Common myeloid progenitor, CD34-positive (primary cell): ENCODE measurements at regions of chr22 and their contacts with region 1.

Region 1: GRCh38 chr22:21629262-21630149 is at the start of gene YDJC:
- DNase-seq: peak; percentile 96 to 98 (median 97)
- H3K4me3 ChIP-seq: peak within 1 kb of the TSS; percentile 84 to 98 (median 92)
- H3K27ac ChIP-seq: peak within 1 kb of the TSS; percentile 74 to 91
- H3K4me1 ChIP-seq: peaks cover 0 to 36% (median 28%) of the 10 kb centered on the region in 4 experiments
- H3K27me3 ChIP-seq: no peaks in the 10 kb centered on the region

Region 2: GRCh38 chr22:21593406-21594232 is 35.9 kb before region 1 on chr22:
- CTCF ChIA-PET with region 1: interaction called, 10 read pairs
- POLR2A ChIA-PET with region 1: interaction called, 3 read pairs
- DNase-seq: no peak
- H3K4me3 ChIP-seq: no peak overlapping the region
- H3K27ac ChIP-seq: no peak overlapping the region
- H3K4me1 ChIP-seq: peaks cover 0 to 40% (median 25%) of the 10 kb centered on the region in 4 experiments
- H3K27me3 ChIP-seq: no peaks in the 10 kb centered on the region

Region 3: GRCh38 chr22:21612865-21613265 is 16.6 kb before region 1 on chr22:
- CTCF ChIA-PET with region 1: interaction called, 15 read pairs
- POLR2A ChIA-PET with region 1: interaction called, 3 read pairs
- DNase-seq: no peak
- H3K4me3 ChIP-seq: no peak overlapping the region
- H3K27ac ChIP-seq: no peak overlapping the region
- H3K4me1 ChIP-seq: no peaks in the 10 kb centered on the region
- H3K27me3 ChIP-seq: no peaks in the 10 kb centered on the region

Region 4: DNA sequence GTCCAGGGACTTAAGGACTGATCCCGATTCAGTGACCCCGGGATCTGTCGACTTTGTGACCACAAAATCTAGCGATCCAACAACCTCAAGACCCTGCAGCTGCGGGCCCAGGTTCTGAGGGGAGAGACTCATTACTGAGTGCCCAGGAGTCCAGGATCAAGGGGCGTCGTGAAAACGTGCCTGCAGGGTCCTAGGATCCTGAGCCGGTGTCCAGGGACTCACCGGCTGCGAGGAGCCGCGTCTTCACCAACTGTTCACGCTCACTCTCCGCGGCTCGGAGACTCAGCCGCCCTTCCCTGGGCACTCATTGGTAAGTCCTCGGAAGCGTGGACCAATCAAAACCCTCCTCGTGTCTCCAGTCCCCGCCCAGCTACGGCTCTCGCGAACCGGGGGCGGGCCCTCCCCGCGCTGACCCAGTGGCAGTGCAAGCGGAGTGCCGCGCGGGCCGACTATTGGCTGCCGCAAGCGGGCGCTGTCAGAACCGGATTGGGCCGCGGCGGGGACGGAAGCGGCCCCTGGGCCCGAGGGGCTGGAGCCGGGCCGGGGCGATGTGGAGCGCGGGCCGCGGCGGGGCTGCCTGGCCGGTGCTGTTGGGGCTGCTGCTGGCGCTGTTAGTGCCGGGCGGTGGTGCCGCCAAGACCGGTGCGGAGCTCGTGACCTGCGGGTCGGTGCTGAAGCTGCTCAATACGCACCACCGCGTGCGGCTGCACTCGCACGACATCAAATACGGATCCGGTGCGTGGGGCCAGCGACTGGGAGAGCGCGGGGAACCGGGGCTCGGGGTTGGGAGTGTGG is 12.5 kb after region 1 on chr22 and contains the start of gene SDF2L1:
- CTCF ChIA-PET with region 1: interaction called, 174 read pairs
- POLR2A ChIA-PET with region 1: interaction called, 41 read pairs
- DNase-seq: peak; percentile 97 to 98 (median 98)
- H3K4me3 ChIP-seq: peak within 1 kb of the TSS; percentile 13 to 74 (median 66)
- H3K27ac ChIP-seq: peak within 1 kb of the TSS; percentile 54 to 95
- H3K4me1 ChIP-seq: peaks cover 3 to 30% (median 23%) of the 10 kb centered on the region in 4 experiments
- H3K27me3 ChIP-seq: peaks cover 0 to 5% (median 0%) of the 10 kb centered on the region in 5 experiments